BJ (cell line): ENCODE measurements at regions of chr3 and their contacts with region 1.

Region 1: DNA sequence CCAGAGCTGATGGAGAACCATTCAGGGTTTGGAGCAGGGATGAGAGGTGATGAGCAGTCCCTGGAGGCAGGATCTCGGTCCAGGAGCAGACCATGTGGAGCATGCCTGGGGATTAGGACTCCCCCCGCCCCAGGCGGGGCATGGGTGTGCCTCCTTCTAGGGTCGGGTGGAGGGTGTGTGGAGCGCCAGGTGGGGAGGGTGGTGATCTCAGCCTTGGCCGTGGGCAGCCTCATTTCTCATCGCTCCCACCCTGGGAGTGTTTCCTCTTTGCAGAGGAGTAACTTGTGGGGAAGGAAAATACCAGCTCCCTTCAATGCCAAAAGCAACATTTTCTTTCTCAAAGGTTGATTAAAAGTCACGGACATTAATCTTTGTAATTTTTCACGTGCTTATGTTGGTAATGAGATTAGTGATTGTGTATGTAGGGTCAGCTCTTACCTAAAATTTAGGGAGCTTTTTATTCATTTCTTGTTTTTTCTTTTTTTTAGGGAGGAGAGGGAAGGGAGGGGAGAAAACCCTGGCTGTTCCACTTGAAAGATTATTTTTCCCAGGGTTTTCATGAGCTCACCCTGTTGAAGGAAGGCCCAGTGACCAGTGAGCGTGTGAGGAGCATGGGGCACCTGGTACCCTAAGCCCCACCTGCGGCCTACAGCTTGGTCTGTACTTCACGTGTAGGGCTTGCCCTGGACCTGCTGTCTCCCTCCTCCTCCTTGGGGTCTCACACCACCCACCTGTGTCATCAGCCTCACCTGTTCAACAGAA is 11.0 kb downstream of the FBLN2 start:
- DNase-seq: no peak
- H3K4me3 ChIP-seq: no peak overlapping the region
- H3K27me3 ChIP-seq: no peaks in the 10 kb centered on the region
- CTCF ChIP-seq: no peak

Region 2: DNA sequence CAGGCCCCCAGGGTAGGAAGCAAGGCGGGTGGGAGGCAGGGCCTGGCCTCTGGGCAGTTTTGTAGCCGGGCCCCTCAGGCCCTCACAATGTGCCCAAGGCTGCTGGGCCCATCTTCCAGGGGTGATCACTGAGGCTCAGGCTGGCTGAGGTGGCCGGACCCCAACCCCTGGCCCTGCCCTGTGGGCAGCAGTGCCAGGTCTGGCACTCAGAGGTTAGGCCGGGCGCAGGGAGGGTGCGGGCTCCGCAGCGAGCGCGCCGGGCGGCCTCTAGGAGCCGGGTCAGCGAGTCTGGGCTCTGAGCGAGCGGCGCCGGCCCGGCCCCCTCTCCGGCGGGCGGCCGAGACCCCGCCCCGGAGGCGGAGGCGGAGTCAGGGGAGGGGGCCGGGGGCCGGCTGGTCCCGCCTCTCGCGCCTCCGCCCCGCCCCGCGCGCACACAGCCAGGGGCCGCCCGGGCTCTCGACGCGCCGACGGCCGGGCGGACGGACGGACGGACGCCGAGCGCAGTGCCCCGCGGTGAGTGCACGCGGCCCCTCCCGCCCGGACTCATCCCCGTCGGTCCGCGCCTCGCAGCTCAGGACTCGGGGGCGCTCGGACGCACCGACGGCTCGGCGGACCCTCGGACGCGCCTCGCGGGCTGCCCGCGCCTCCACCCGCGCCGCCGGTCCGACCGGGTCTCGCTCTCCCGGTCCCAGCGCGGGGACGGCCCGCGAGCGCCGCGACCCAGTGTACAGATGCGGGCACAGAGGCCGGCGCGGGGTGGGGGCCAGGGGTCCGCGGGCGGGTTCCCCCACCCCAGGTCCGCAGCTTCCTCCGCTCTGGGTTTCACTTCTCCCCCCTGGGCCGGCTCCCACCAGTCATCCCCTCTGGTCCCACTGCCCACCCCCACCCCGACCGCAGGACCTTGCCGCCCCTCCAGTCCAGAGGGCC is 11.0 kb before region 1 on chr3 and contains the start of gene FBLN2:
- CTCF ChIA-PET with region 1: interaction called, 11 read pairs
- POLR2A ChIA-PET with region 1: no interaction called
- DNase-seq: no peak
- H3K4me3 ChIP-seq: peak within 1 kb of the TSS; percentile 61
- H3K27me3 ChIP-seq: no peaks in the 10 kb centered on the region
- CTCF ChIP-seq: no peak
- polyA plus RNA-seq, gene FBLN2: 131 and 248 TPM in 2 replicates

Region 3: DNA sequence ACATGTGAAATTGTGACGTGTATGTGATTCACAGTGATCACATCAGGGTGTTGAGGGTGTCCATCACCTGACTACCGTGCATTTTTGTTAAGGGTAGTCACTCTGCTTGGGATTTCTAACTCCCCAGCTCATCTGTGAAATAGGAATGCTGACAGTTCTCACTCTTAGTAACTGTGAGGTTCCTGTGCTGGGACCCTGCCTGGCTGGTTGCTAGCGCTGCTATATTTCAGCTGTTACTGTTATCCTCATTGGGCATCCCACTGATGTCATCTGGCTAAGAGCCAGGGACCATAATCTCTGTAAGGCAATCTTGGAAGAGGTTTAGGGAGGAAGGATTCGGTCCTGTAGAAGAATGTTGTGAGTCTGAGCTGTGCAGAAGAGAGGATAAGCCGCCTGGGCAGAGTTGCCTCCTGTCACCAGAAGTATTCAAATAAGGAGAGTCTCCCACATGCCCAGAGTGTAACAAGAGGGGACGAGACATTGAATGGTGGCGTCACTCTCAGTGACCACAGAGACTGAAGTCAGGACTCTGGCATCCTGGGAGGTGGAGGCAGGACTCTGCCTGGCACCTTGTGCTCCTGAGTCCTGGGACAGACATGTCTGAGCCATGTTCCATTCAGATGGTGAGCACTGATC is 41.1 kb after region 1 on chr3:
- CTCF ChIA-PET with region 1: no interaction called
- POLR2A ChIA-PET with region 1: no interaction called
- DNase-seq: no peak
- H3K4me3 ChIP-seq: no peak overlapping the region
- H3K27me3 ChIP-seq: no peaks in the 10 kb centered on the region
- CTCF ChIP-seq: no peak